ENCODE measurements at regions of chr17 and their contacts with region 1.

Region 1: GRCh38 chr17:18260332-18261144 is at the start of gene MIEF2:
- DNase-seq: peak; percentile 80
- ATAC-seq: peak; percentile 90
- H3K4me3 ChIP-seq: peak within 1 kb of the TSS; percentile 91
- H3K27ac ChIP-seq: peak within 1 kb of the TSS; percentile 82
- H3K4me1 ChIP-seq: peaks cover 21% of the 10 kb centered on the region
- H3K27me3 ChIP-seq: no peaks in the 10 kb centered on the region
- CTCF ChIP-seq: no peak
- EP300 ChIP-seq: no peak
- POLR2A ChIP-seq: peak; percentile 77
- RAD21 ChIP-seq: no peak
- polyA plus RNA-seq, gene MIEF2: 0.16 to 0.42 TPM

Region 2: DNA sequence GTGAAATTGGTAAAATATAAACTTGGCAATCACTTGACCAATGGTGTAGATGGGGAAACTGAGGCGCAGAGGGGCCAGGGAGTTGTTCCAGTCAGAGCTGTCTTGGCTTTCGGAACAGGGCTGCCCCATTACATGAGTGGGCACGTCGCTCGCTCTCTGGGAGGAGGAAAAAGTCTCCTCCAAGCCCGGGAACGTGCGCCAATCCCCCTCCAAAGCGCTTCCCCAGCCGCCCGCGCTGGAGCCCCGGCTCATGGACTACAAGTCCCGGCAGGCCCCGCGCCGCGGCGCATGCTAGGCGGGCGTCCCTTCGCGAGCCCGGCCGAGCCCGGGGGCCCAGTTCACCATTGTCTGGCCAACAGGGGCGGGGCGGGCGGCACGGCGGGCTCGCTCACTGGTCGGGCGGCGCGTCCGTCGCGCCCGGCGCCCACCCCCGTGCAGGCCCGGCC is 35.4 kb before region 1 on chr17:
- CTCF ChIA-PET with region 1: no interaction called
- POLR2A ChIA-PET with region 1: interaction called, 4 read pairs
- RAD21 ChIA-PET with region 1: no interaction called
- SMC1A ChIA-PET with region 1: no interaction called
- in situ Hi-C with region 1: no loop called
- intact Hi-C with region 1: loop called (anchors 2 kb)
- DNase-seq: peak; percentile 34
- ATAC-seq: peak; percentile 97
- H3K4me3 ChIP-seq: no peak overlapping the region
- H3K27ac ChIP-seq: no peak overlapping the region
- H3K4me1 ChIP-seq: peaks cover 10% of the 10 kb centered on the region
- H3K27me3 ChIP-seq: no peaks in the 10 kb centered on the region
- CTCF ChIP-seq: no peak
- EP300 ChIP-seq: no peak
- POLR2A ChIP-seq: no peak
- RAD21 ChIP-seq: no peak

Region 3: GRCh38 chr17:18241229-18241871 is 19.2 kb before region 1 on chr17:
- CTCF ChIA-PET with region 1: no interaction called
- POLR2A ChIA-PET with region 1: no interaction called
- RAD21 ChIA-PET with region 1: no interaction called
- SMC1A ChIA-PET with region 1: no interaction called
- in situ Hi-C with region 1: no loop called
- intact Hi-C with region 1: no loop called
- DNase-seq: no peak
- ATAC-seq: no peak
- H3K4me3 ChIP-seq: no peak overlapping the region
- H3K27ac ChIP-seq: no peak overlapping the region
- H3K4me1 ChIP-seq: no peaks in the 10 kb centered on the region
- H3K27me3 ChIP-seq: no peaks in the 10 kb centered on the region
- CTCF ChIP-seq: no peak
- EP300 ChIP-seq: no peak
- POLR2A ChIP-seq: no peak
- RAD21 ChIP-seq: no peak

Region 4: GRCh38 chr17:18314731-18315561 is 54.4 kb after region 1 on chr17 and contains the starts of genes SMCR8 and TOP3A:
- CTCF ChIA-PET with region 1: no interaction called
- POLR2A ChIA-PET with region 1: interaction called, 5 read pairs
- RAD21 ChIA-PET with region 1: interaction called, 3 read pairs
- SMC1A ChIA-PET with region 1: no interaction called
- in situ Hi-C with region 1: no loop called
- intact Hi-C with region 1: loop called (anchors 2 kb)
- DNase-seq: peak; percentile 89
- ATAC-seq: peak; percentile 94
- H3K4me3 ChIP-seq: peak within 1 kb of the TSS; percentile 89
- H3K27ac ChIP-seq: peak within 1 kb of the TSS; percentile 84
- H3K4me1 ChIP-seq: peaks cover 22% of the 10 kb centered on the region
- H3K27me3 ChIP-seq: no peaks in the 10 kb centered on the region
- CTCF ChIP-seq: no peak
- EP300 ChIP-seq: no peak
- POLR2A ChIP-seq: peak; percentile 79
- RAD21 ChIP-seq: no peak
- polyA plus RNA-seq, gene SMCR8: 0.52 to 0.77 TPM
- polyA plus RNA-seq, gene TOP3A: 4.2 to 11.5 TPM

Measured in GM12878 (cell line).